ENCODE measurements at regions of chr5 and their contacts with region 1.

Region 1: DNA sequence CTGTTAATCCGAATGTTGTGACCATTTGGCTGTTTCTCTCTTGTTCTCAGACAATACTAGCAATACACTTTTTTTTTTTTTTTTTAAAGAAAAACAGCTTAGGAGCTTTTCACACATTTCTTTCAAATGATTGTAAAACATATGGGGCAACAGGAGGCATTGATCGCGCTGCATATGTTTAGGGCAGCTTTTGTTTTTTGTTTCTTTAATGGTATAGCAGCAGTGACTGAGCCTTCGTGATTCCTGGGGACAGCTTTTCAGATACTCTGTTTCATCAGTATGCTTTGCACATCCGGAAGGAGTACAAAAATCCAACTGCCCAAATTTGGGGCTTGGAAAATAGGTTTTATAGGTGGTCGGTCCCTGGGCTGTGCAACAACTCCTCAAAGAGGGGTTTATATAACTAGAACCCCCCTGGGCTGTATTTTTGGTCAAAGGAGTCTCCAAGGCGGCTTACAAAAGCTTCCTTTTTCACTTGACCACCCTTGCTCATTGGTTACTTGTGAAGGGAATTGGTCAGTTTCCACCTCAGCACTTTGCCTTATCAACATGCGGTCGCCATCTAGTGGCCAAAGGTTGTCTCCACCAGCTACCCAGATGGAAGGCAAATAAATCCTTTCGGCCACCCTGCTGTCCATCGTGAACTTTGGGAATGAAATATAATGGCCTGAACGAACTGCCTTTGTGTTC is 91.8 kb downstream of the PDE6A start:
- DNase-seq: peak; percentile 61
- H3K4me3 Mint-ChIP-seq: no peak overlapping the region
- H3K27ac Mint-ChIP-seq: no peak overlapping the region
- H3K4me1 Mint-ChIP-seq: no peaks in the 10 kb centered on the region
- H3K27me3 Mint-ChIP-seq: no peaks in the 10 kb centered on the region

Region 2: DNA sequence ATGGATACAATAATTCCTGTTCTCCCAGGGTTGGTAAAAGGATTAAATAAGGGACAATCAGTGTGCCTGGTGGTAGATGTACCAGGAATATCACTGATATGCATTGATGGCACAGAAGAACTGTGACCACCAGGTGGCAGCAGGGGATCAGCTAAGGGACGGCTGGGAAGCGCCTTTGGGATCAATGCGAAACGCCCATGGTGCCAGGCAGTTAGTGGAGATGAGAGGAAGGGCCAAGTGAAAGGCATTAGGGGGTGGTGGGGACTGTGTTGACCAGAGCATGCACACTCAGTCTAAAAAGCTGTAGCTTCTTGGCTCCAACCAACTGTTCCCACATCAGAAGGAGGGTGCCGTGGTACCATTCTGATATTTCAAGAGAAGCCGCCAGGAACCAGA is 215.9 kb before region 1 on chr5:
- CTCF ChIA-PET with region 1: interaction called, 18 read pairs
- POLR2A ChIA-PET with region 1: no interaction called
- intact Hi-C with region 1: no loop called
- DNase-seq: peak; percentile 74
- H3K4me3 Mint-ChIP-seq: no peak overlapping the region
- H3K27ac Mint-ChIP-seq: no peak overlapping the region
- H3K4me1 Mint-ChIP-seq: peaks cover 16% of the 10 kb centered on the region
- H3K27me3 Mint-ChIP-seq: no peaks in the 10 kb centered on the region

Region 3: DNA sequence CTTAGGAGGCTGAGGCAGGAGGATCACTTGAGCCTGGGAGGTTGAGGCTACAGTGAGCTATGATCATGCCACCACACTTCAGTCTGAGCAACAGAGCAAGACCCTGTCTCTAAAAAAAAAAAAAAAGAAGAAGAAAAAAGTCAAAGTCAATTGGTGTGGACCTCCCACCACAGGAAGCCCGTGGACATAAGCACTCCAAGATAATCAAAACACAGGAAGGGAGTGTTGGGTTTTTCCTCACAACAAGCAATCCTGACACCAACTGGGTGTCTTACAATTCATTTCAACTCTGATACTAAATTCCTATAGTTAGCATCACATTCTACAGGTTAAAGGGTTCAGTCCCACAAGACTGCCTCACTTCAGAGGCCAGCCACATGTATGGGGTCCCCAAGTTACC is 21.1 kb after region 1 on chr5:
- CTCF ChIA-PET with region 1: interaction called, 23 read pairs
- POLR2A ChIA-PET with region 1: no interaction called
- intact Hi-C with region 1: no loop called
- DNase-seq: no peak
- H3K4me3 Mint-ChIP-seq: no peak overlapping the region
- H3K27ac Mint-ChIP-seq: no peak overlapping the region
- H3K4me1 Mint-ChIP-seq: no peaks in the 10 kb centered on the region
- H3K27me3 Mint-ChIP-seq: no peaks in the 10 kb centered on the region

Region 4: GRCh38 chr5:149979896-149980295 is 127.1 kb after region 1 on chr5:
- CTCF ChIA-PET with region 1: no interaction called
- POLR2A ChIA-PET with region 1: no interaction called
- intact Hi-C with region 1: no loop called
- DNase-seq: no peak
- H3K4me3 Mint-ChIP-seq: no peak overlapping the region
- H3K27ac Mint-ChIP-seq: no peak overlapping the region
- H3K4me1 Mint-ChIP-seq: peaks cover 4% of the 10 kb centered on the region
- H3K27me3 Mint-ChIP-seq: no peaks in the 10 kb centered on the region

Region 5: DNA sequence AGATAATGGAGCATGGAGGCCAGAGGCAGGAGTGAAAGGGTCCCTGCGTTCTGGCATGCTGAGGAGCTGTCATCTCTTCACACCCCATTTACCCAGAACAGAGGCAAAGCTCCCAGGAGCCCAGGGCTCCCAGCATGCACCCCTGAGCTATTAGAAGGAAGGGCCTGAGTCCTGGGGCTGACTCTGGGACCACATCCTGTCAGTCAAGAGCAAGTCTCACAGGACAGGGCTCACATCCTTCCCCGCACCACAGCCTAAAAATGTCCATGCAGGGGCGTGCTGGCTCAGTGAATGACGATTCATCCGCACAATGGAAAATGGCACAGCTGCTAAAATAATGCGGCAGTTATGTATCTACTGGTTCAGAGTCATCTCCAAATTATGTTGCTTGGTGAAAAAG is 405.3 kb after region 1 on chr5:
- CTCF ChIA-PET with region 1: no interaction called
- POLR2A ChIA-PET with region 1: no interaction called
- intact Hi-C with region 1: no loop called
- DNase-seq: no peak
- H3K4me3 Mint-ChIP-seq: no peak overlapping the region
- H3K27ac Mint-ChIP-seq: no peak overlapping the region
- H3K4me1 Mint-ChIP-seq: no peaks in the 10 kb centered on the region
- H3K27me3 Mint-ChIP-seq: peaks cover 1% of the 10 kb centered on the region

Measured in activated CD4-positive, alpha-beta memory T cell treated with anti-CD3 and anti-CD28 coated beads for 36 hours (primary cell).